ENCODE measurements at regions of chr4 and their contacts with region 1.

Region 1: GRCh38 chr4:112523764-112524505 is 8.0 kb upstream of the NEUROG2 start:
- DNase-seq: peak; percentile 75
- H3K4me3 ChIP-seq: peak overlapping the region; percentile 50
- H3K27ac ChIP-seq: no peak overlapping the region
- H3K4me1 ChIP-seq: peaks cover 6% of the 10 kb centered on the region
- H3K27me3 ChIP-seq: peaks cover 39% of the 10 kb centered on the region
- CTCF ChIP-seq: peak; percentile 93

Region 2: DNA sequence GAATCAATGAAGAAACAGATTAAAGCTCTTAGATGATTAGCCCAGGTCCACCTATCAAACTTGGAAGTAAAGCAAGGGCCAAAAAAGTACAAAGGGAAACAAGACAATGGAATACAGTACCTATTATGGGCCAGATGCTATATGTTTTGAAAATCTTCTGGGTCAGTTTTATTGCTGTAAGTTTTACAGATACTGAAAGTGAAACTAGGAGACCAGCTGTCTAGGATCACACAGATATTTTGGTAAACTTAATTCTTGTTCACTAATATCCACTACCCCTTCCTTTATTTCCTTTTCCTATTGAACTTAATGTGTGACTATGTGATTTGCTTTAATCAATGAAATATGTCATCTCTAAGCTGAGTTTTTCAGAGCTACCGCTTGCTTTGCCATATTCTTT is 1395.6 kb before region 1 on chr4:
- CTCF ChIA-PET with region 1: no interaction called
- POLR2A ChIA-PET with region 1: no interaction called
- intact Hi-C with region 1: no loop called
- DNase-seq: no peak
- H3K4me3 ChIP-seq: no peak overlapping the region
- H3K27ac ChIP-seq: no peak overlapping the region
- H3K4me1 ChIP-seq: no peaks in the 10 kb centered on the region
- H3K27me3 ChIP-seq: no peaks in the 10 kb centered on the region
- CTCF ChIP-seq: no peak

Region 3: GRCh38 chr4:112214390-112215264 is 309.3 kb before region 1 on chr4:
- CTCF ChIA-PET with region 1: no interaction called
- POLR2A ChIA-PET with region 1: no interaction called
- intact Hi-C with region 1: loop called (anchors 5 kb)
- DNase-seq: peak; percentile 51
- H3K4me3 ChIP-seq: no peak overlapping the region
- H3K27ac ChIP-seq: no peak overlapping the region
- H3K4me1 ChIP-seq: no peaks in the 10 kb centered on the region
- H3K27me3 ChIP-seq: no peaks in the 10 kb centered on the region
- CTCF ChIP-seq: peak; percentile 62

Region 4: DNA sequence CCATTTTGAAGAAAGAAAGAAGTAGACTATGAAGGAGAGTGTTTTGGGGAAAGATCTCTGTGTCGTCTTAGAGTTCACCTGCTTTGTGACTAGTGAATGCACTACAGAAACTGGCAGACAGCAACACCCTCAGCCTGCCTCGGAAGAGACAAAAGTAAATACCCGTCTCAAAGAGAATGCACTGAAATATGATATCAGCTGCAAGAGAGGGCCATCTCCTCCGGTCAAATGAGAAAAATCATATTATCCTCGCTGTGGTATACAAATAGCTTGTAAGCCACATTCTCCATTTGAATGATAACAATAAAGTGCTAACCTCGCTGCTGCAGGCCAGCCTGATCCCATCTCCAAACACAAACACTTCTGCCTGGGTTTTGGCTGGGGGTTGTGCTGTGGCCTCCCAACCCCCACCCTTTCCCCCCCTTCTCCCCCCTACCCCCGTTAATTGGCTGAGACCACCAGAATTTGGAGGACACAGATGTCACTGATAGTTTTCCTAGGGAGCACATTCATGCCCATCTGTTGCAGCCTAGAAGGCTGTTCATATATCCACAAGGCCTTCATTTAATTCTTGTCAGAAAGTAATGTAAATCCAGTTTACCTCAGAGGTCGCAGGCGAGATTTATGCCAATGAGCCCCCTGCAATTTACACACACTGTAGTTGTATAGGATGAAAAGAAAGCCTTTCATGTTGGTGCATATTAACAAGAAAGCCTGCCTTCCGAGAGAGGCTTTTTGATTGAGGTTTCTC is 180.4 kb before region 1 on chr4:
- CTCF ChIA-PET with region 1: interaction called, 9 read pairs
- POLR2A ChIA-PET with region 1: no interaction called
- intact Hi-C with region 1: loop called (anchors 5 kb)
- DNase-seq: no peak
- H3K4me3 ChIP-seq: no peak overlapping the region
- H3K27ac ChIP-seq: no peak overlapping the region
- H3K4me1 ChIP-seq: peaks cover 47% of the 10 kb centered on the region
- H3K27me3 ChIP-seq: no peaks in the 10 kb centered on the region
- CTCF ChIP-seq: no peak